Activated T-helper 1 cell treated with anti-CD3 and anti-CD28 coated beads, Interleukin-12 subunit alpha, Interleukin-12 subunit beta, Interleukin-2, Interleukin-4 antibody, amounts not matched to agents 30 ng/mL and 10 ng/mL and 1 ng/mL, durations not matched to agents 14 hours and 24 hours and 36 hours (primary cell): ENCODE measurements at regions of chr19 and their contacts with region 1.

Region 1: DNA sequence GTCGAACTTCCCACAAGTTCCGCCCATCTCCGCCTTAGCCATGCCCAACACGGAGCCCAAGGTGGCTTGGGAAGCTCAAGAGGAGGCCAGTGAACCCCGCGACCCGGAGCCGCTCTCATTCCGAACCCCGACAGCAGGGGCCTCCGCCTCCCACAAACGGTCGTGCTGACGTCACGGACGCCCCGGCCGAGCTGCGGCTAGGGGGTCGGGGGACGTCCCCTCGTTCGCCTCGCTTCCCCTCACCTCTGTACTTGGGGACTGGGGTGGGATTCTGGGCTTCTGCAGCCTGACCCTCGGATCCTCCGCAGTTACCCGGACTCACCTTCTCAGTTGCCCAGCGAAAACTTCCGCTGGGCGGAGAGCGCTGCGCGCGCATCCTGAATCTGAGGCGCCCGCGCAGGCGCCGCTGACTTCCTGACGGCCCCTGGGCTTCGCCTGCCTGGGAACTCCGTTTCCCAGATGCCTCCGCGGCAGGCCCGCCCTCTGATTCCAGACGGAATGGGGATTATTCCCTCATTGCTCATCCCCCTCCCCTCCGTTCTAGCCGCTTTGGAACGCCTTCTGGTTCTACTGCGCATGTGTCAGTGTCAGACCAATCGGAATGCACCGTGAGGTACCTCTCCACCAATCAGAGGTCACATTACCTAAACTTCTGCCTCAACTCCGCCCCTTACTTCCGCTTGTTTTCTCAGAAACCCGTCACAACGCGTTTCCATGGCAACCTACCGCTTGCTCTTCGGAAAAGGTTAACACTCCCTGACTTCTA is at the start of gene VRK3:
- DNase-seq: peak; percentile 99
- H3K4me3 Mint-ChIP-seq: peak within 1 kb of the TSS; percentile 93
- H3K27ac Mint-ChIP-seq: peak within 1 kb of the TSS; percentile 99
- H3K4me1 Mint-ChIP-seq: peaks cover 40% of the 10 kb centered on the region
- H3K27me3 Mint-ChIP-seq: peaks cover 6% of the 10 kb centered on the region
- total RNA-seq, gene VRK3: 66.7 and 69.4 TPM in 2 replicates

Region 2: GRCh38 chr19:49590071-49590970 is 434.9 kb before region 1 on chr19:
- intact Hi-C with region 1: loop called (anchors 5 kb)
- DNase-seq: peak; percentile 93
- H3K4me3 Mint-ChIP-seq: peak overlapping the region; percentile 88
- H3K27ac Mint-ChIP-seq: peak overlapping the region; percentile 84
- H3K4me1 Mint-ChIP-seq: peaks cover 40% of the 10 kb centered on the region
- H3K27me3 Mint-ChIP-seq: peaks cover 10% of the 10 kb centered on the region

Region 3: GRCh38 chr19:49817964-49818648 is 207.1 kb before region 1 on chr19 and contains the start of gene MED25:
- intact Hi-C with region 1: loop called (anchors 1 kb)
- DNase-seq: peak; percentile 88
- H3K4me3 Mint-ChIP-seq: peak within 1 kb of the TSS; percentile 94
- H3K27ac Mint-ChIP-seq: peak within 1 kb of the TSS; percentile 93
- H3K4me1 Mint-ChIP-seq: peaks cover 25% of the 10 kb centered on the region
- H3K27me3 Mint-ChIP-seq: no peaks in the 10 kb centered on the region
- total RNA-seq, gene MED25: 54.2 and 54.5 TPM in 2 replicates

Region 4: GRCh38 chr19:49929611-49930482 is 95.4 kb before region 1 on chr19:
- intact Hi-C with region 1: loop called (anchors 1 kb)
- DNase-seq: peak; percentile 89
- H3K4me3 Mint-ChIP-seq: peak overlapping the region; percentile 97
- H3K27ac Mint-ChIP-seq: peak overlapping the region; percentile 100
- H3K4me1 Mint-ChIP-seq: peaks cover 49% of the 10 kb centered on the region
- H3K27me3 Mint-ChIP-seq: peaks cover 2% of the 10 kb centered on the region

Region 5: DNA sequence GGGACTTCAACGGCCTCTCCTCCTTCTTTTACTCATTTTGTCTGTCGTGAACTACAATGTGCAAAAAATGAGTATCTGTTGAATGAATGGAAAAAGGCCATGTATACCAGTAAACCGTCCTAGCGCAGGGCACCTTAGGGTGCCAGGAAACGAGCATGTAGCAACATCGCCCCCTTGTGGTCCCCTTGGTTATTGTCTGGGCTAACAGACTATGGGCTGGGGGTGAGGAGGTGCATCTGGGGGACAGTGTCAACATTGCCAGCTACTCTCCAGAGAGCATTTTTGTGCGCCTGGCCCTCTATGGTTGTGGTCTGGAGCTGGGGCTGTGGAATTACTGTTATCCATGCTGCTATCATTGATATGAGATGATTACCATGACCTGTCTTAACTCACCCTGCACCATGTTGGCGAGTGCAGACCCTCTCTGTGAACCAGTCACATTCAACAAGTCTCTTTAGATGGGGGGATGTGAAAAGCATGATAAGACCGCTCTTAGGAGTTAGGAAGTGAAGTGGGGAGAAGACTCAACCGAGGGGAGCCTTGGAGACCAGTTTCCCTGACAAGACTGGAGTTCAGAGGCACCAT is 41.5 kb before region 1 on chr19:
- intact Hi-C with region 1: loop called (anchors 1 kb)
- DNase-seq: peak; percentile 61
- H3K4me3 Mint-ChIP-seq: no peak overlapping the region
- H3K27ac Mint-ChIP-seq: no peak overlapping the region
- H3K4me1 Mint-ChIP-seq: peaks cover 13% of the 10 kb centered on the region
- H3K27me3 Mint-ChIP-seq: no peaks in the 10 kb centered on the region

Region 6: DNA sequence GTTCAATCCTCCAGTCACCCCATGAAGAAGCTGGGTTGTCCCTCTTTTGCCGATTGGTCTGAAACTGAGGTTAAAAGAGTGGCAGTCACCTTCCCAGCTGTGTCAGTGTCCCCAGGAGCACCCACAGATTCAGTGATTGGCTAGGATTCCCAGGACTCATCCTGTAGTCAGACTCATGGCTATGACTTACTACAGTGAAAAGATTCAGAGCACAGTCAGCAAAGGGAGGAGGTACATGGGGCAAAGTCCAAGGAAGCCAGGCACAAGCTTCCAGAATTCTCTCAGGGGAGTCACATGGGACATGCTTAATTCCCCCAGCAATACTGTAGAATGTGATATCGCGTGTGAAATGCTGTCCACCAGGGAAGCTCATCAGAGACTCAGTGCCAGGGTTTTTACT is 14.8 kb after region 1 on chr19:
- intact Hi-C with region 1: no loop called
- DNase-seq: no peak
- H3K4me3 Mint-ChIP-seq: no peak overlapping the region
- H3K27ac Mint-ChIP-seq: no peak overlapping the region
- H3K4me1 Mint-ChIP-seq: no peaks in the 10 kb centered on the region
- H3K27me3 Mint-ChIP-seq: no peaks in the 10 kb centered on the region

Region 7: DNA sequence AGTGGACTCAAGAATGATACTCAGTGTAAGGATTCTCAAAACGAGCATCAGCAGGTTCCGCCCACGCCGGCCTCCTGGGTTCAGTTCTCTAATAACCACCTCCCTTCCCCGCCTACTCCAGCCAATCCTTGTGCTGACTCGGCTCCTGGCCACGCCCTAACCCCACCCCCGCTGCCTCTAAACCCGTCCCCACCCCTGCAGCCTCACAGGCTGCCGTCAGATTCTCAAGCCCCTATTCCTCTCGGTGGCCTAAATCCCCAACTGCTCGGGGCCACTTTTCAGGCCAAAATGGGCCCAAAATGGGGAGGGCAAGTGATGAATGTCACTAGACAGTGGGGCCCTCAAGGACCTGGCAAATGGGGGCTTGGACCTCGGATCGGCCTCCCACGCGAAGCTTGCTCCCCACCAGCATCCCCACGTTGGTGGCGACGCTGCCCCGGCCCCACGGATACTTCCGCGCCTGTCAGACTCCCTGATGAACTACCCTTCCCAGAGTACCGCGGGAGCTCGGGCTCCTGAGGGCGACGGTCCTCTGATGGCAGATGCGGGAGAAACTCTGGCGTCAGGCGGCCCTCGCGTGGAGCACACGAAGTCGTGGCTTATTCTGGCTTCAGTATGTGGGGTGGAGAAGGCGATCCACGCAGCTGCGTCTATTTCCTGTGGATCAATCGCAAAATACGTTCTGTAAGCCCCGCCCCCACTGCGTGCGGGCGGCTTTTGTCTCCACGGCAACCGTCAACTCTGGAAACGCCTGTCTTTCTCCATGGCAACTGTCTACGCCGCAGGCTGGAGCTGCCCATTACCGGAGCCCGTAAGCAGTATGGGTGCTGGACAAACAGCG is 25.4 kb after region 1 on chr19:
- intact Hi-C with region 1: loop called (anchors 1 kb)
- DNase-seq: peak; percentile 59
- H3K4me3 Mint-ChIP-seq: peak overlapping the region; percentile 76
- H3K27ac Mint-ChIP-seq: peak overlapping the region; percentile 70
- H3K4me1 Mint-ChIP-seq: peaks cover 10% of the 10 kb centered on the region
- H3K27me3 Mint-ChIP-seq: peaks cover 4% of the 10 kb centered on the region

Region 8: DNA sequence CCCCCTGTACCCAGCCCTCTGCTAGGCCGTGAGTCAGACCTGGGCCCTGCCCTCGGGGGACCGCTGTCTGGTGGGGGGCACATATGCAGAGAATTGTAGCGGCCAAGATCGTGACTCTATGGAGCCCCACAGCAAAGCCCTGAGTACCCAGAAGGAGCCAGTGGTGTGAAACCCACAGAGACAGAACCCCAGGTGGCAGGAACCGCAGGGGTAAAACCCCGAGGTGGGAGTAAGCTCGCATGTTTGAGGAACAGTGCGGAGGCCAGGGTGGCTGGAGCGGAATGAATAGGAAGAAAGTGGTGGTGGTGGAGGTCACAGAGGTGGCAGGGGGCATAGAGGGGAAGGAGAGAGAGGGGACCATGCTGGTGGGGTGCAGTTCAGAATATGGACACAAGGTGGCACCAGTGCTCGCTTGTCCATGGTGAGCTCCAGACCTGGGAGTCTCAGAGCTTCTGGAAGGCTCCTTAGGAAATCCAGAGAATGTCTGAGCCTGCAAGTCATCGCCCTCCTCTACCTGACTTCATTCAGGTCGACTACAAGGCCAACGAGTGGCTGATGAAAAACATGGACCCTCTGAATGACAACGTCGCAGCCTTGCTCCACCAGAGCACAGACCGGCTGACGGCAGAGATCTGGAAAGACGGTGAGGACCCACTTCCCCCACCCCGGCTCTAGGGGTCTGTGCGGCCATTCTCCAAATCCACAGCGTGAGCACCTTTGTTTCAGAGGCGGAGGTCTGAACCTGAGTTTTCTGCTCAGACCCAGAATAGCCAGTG is 227.1 kb after region 1 on chr19:
- intact Hi-C with region 1: no loop called
- DNase-seq: no peak
- H3K4me3 Mint-ChIP-seq: no peak overlapping the region
- H3K27ac Mint-ChIP-seq: no peak overlapping the region
- H3K4me1 Mint-ChIP-seq: no peaks in the 10 kb centered on the region
- H3K27me3 Mint-ChIP-seq: no peaks in the 10 kb centered on the region

Region 9: GRCh38 chr19:50531118-50531612 is 506.0 kb after region 1 on chr19:
- intact Hi-C with region 1: no loop called
- DNase-seq: no peak
- H3K4me3 Mint-ChIP-seq: no peak overlapping the region
- H3K27ac Mint-ChIP-seq: no peak overlapping the region
- H3K4me1 Mint-ChIP-seq: no peaks in the 10 kb centered on the region
- H3K27me3 Mint-ChIP-seq: no peaks in the 10 kb centered on the region

Region 10: GRCh38 chr19:51108066-51108804 is 1083.0 kb after region 1 on chr19 and contains the start of gene CTU1:
- intact Hi-C with region 1: loop called (anchors 1 kb)
- DNase-seq: peak; percentile 98
- H3K4me3 Mint-ChIP-seq: peak within 1 kb of the TSS; percentile 92
- H3K27ac Mint-ChIP-seq: peak within 1 kb of the TSS; percentile 96
- H3K4me1 Mint-ChIP-seq: peaks cover 24% of the 10 kb centered on the region
- H3K27me3 Mint-ChIP-seq: no peaks in the 10 kb centered on the region
- total RNA-seq, gene CTU1: 12.5 and 14.0 TPM in 2 replicates